ENCODE measurements at regions of chr1 and their contacts with region 1.

Region 1: GRCh38 chr1:10867138-10867721 is 70.8 kb upstream of the CASZ1 start:
- DNase-seq: peak; percentile 52 to 80
- H3K4me3 ChIP-seq: peak overlapping the region; percentile 44
- H3K4me3 Mint-ChIP-seq: peak overlapping the region; percentile 67
- H3K27ac Mint-ChIP-seq: peak overlapping the region; percentile 45
- H3K4me1 ChIP-seq: peaks cover 14% of the 10 kb centered on the region
- H3K4me1 Mint-ChIP-seq: peaks cover 5% of the 10 kb centered on the region
- H3K27me3 ChIP-seq: no peaks in the 10 kb centered on the region
- H3K27me3 Mint-ChIP-seq: peaks cover 17% of the 10 kb centered on the region
- CTCF ChIP-seq: peak; percentile 9 to 80

Region 2: DNA sequence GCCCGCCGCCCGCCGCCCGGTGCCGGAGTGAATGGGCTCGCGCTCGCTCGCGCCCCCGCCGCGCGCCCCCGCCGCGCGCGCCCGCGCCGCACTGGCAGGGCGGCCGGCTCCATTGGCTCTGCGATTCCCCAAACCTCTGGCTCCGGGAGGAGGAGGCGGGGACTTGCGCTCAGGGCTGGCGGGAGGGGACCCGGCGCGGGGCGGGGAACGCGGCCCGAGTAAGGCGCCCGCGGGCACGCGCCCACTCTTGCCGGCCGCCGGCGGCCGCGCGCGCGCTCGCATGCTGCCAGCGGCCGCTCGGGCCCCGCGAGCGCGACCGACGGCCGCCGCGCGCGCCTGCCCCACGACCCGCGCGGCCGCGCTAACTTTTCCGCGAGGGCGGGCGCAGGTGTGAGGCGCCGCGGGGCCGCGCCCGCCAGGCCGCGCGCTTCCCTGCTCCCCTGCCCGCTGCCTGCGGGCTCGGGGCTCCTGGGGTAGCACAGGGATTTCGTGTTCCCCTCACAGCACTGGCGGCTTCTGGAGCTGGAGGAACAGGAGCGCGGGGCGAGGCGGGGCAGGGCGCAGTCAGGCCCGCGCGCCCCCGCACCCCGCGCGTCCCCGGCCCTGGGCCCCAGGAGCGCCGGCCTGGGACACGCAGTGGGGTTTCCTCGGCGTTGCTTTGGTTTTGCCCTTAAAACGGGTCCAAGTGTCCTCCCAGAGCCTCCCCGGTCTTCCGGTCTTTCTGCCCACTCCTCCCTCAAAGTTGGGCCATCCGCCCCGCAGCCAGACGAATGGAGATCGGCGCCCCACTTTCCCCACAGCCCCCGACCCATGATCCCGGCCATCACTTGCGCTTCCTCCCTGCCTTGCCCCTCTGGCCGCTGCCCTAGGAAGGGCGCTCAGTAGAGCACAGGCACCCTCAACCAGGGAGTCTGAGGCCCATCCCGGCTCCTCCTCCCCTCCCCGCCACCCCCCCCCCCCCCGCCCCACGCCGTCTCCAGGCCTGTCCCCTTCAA is 172.3 kb before region 1 on chr1:
- CTCF ChIA-PET with region 1: interaction called, 5 read pairs
- POLR2A ChIA-PET with region 1: no interaction called
- intact Hi-C with region 1: loop called (anchors 1 kb)
- DNase-seq: peak; percentile 91
- H3K4me3 ChIP-seq: peak overlapping the region; percentile 23
- H3K4me3 Mint-ChIP-seq: peak overlapping the region; percentile 68
- H3K27ac Mint-ChIP-seq: no peak overlapping the region
- H3K4me1 ChIP-seq: peaks cover 12% of the 10 kb centered on the region
- H3K4me1 Mint-ChIP-seq: peaks cover 10% of the 10 kb centered on the region
- H3K27me3 ChIP-seq: no peaks in the 10 kb centered on the region
- H3K27me3 Mint-ChIP-seq: no peaks in the 10 kb centered on the region
- CTCF ChIP-seq: no peak

Region 3: GRCh38 chr1:10901086-10901890 is 34.1 kb after region 1 on chr1:
- CTCF ChIA-PET with region 1: interaction called, 3 read pairs
- POLR2A ChIA-PET with region 1: interaction called, 12 read pairs
- intact Hi-C with region 1: no loop called
- DNase-seq: peak; percentile 68 to 73
- H3K4me3 ChIP-seq: peak overlapping the region; percentile 10; the same call in 1 of the 2 replicates
- H3K4me3 Mint-ChIP-seq: peak overlapping the region; percentile 78
- H3K27ac Mint-ChIP-seq: peak overlapping the region; percentile 98
- H3K4me1 ChIP-seq: peaks cover 38% of the 10 kb centered on the region
- H3K4me1 Mint-ChIP-seq: peaks cover 25% of the 10 kb centered on the region
- H3K27me3 ChIP-seq: no peaks in the 10 kb centered on the region
- H3K27me3 Mint-ChIP-seq: no peaks in the 10 kb centered on the region
- CTCF ChIP-seq: no peak

Region 4: GRCh38 chr1:10917513-10918454 is 50.6 kb after region 1 on chr1:
- CTCF ChIA-PET with region 1: no interaction called
- POLR2A ChIA-PET with region 1: no interaction called
- intact Hi-C with region 1: no loop called
- DNase-seq: no peak
- H3K4me3 ChIP-seq: no peak overlapping the region
- H3K4me3 Mint-ChIP-seq: no peak overlapping the region
- H3K27ac Mint-ChIP-seq: no peak overlapping the region
- H3K4me1 ChIP-seq: no peaks in the 10 kb centered on the region
- H3K4me1 Mint-ChIP-seq: no peaks in the 10 kb centered on the region
- H3K27me3 ChIP-seq: no peaks in the 10 kb centered on the region
- H3K27me3 Mint-ChIP-seq: no peaks in the 10 kb centered on the region
- CTCF ChIP-seq: no peak

Region 5: GRCh38 chr1:10980094-10980577 is 112.9 kb after region 1 on chr1:
- CTCF ChIA-PET with region 1: no interaction called
- POLR2A ChIA-PET with region 1: no interaction called
- intact Hi-C with region 1: no loop called
- DNase-seq: no peak
- H3K4me3 ChIP-seq: no peak overlapping the region
- H3K4me3 Mint-ChIP-seq: no peak overlapping the region
- H3K27ac Mint-ChIP-seq: no peak overlapping the region
- H3K4me1 ChIP-seq: no peaks in the 10 kb centered on the region
- H3K4me1 Mint-ChIP-seq: peaks cover 6% of the 10 kb centered on the region
- H3K27me3 ChIP-seq: no peaks in the 10 kb centered on the region
- H3K27me3 Mint-ChIP-seq: peaks cover 3% of the 10 kb centered on the region
- CTCF ChIP-seq: no peak